Vagina (tissue), 2 donors: ENCODE measurements at regions of chr6 and their contacts with region 1.

Region 1: DNA sequence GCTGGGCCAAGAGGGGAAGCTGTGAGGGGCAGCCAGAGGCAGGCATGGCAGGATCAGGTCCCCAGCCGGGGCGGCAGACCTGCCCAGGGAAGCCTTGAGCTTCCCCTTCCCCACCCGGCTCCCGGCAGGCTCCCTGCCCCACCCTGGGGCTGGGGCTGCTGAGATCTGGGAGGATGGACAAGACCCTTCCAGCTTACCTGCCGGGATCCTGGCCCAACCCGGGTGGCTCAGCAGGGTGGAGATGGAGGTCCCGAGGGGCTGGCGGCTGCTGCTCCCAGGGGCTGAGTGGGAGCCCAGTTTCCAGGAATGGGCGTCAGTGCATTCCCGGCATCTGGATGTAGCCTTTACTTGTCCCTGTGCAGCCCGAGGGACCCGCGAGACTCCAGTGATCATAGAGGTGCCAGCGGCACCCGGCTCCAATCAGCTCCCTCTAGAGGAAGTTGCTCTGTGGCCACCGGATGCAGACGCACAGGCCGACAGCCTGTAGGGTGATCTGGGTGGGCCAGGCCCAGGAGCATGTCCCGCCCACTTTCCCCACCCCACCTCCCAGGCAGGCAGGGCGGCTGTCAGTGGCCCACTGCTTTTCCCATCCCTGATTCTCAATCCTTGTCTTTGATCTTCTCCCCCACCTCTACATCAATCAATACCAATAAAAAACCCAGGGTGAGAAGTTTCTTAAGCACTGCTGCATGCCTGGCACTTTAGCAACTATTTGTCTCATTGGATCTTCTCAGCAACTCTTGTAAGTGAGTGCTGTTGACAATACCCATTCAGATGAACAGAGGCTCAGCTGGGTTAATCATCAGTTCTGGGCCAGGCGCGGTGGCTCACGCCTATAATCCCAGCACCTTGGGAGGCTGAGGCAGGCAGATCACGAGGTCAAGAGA is at the start of gene BAK1:
- DNase-seq: no peak
- H3K4me3 ChIP-seq: peak within 1 kb of the TSS; percentile 64 to 92
- H3K27ac ChIP-seq: peak within 1 kb of the TSS; percentile 91
- H3K4me1 ChIP-seq: peaks cover 39% of the 10 kb centered on the region
- H3K27me3 ChIP-seq: no peaks in the 10 kb centered on the region
- CTCF ChIP-seq: peak in 2 of 3 experiments; percentile 12 to 52
- POLR2A ChIP-seq: peak in 1 of 2 donors; percentile 59
- total RNA-seq, gene BAK1: 19.2 TPM

Region 2: DNA sequence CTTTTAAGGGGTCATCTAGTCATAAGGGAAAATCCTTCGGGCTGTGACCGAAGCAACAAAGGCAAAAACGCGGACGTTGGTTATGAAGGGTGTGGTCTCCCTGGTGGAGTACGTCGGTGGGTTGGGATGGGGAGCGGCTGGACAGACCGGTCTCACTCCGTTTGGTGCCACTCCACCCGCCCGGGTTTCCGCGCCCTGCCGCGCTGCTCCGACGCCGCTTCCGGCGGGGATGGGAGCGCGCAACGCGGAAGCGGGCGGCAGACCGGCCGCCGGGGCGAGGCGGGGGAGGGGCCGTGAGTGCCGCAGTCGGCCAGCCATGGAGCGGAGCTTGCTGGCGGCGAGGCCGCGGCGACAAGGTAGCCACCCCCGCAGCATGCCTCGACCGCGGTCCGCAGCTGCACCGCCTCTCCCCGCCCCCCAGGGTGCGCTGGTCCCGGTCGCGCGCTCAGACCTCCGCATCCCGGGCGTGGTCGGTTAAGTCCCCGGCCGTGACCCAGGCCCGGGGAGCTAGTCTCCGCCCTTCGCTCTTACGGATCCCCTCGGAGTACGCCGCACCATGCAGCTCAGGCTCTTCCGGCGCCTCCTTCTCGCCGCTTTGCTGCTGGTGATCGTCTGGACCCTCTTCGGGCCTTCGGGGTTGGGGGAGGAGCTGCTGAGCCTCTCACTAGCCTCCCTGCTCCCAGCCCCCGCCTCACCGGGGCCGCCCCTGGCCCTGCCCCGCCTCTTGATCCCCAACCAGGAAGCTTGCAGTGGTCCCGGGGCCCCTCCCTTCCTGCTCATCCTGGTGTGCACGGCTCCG is 303.0 kb before region 1 on chr6 and contains the start of gene B3GALT4:
- intact Hi-C with region 1: loop called (anchors 5 kb)
- DNase-seq: no peak
- H3K4me3 ChIP-seq: peak within 1 kb of the TSS; percentile 61 to 86
- H3K27ac ChIP-seq: peak within 1 kb of the TSS; percentile 86
- H3K4me1 ChIP-seq: peaks cover 58% of the 10 kb centered on the region
- H3K27me3 ChIP-seq: no peaks in the 10 kb centered on the region
- CTCF ChIP-seq: peak in 2 of 3 experiments; percentile 40
- POLR2A ChIP-seq: peak in 1 of 2 donors; percentile 41
- total RNA-seq, gene B3GALT4: 14.0 TPM

Region 3: GRCh38 chr6:34145161-34146020 is 565.3 kb after region 1 on chr6:
- intact Hi-C with region 1: loop called (anchors 10 kb)
- DNase-seq: no peak
- H3K4me3 ChIP-seq: peak overlapping the region; percentile 29 to 50
- H3K27ac ChIP-seq: no peak overlapping the region
- H3K4me1 ChIP-seq: peaks cover 25% of the 10 kb centered on the region
- H3K27me3 ChIP-seq: peaks cover 7% of the 10 kb centered on the region
- CTCF ChIP-seq: no peak
- POLR2A ChIP-seq: no peak